A549 (cell line): ENCODE measurements at regions of chr6 and their contacts with region 1.

Region 1: DNA sequence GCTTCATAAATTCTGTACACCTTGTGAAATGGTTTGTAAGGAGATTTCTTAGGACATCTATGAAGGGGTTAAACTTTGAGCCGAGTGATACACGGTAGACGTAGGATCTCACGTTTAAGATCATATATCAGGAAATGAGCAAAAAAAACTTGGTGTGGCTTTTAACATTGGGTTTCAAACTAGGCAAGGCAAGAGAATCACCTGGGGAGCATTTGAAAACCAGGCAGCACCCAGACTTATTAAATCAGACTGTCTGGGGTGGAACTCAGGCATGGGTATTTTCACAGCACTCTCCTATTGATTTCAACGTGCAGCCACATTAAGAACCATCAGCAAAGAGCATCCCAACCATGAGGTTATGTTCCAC is 26.4 kb downstream of the LY86 start:
- DNase-seq: no peak
- ATAC-seq: no peak
- H3K4me3 ChIP-seq: no peak overlapping the region
- H3K27ac ChIP-seq: no peak overlapping the region
- H3K4me1 ChIP-seq: no peaks in the 10 kb centered on the region
- CTCF ChIP-seq: no peak
- EP300 ChIP-seq: no peak
- POLR2A ChIP-seq: no peak
- RAD21 ChIP-seq: no peak

Region 2: DNA sequence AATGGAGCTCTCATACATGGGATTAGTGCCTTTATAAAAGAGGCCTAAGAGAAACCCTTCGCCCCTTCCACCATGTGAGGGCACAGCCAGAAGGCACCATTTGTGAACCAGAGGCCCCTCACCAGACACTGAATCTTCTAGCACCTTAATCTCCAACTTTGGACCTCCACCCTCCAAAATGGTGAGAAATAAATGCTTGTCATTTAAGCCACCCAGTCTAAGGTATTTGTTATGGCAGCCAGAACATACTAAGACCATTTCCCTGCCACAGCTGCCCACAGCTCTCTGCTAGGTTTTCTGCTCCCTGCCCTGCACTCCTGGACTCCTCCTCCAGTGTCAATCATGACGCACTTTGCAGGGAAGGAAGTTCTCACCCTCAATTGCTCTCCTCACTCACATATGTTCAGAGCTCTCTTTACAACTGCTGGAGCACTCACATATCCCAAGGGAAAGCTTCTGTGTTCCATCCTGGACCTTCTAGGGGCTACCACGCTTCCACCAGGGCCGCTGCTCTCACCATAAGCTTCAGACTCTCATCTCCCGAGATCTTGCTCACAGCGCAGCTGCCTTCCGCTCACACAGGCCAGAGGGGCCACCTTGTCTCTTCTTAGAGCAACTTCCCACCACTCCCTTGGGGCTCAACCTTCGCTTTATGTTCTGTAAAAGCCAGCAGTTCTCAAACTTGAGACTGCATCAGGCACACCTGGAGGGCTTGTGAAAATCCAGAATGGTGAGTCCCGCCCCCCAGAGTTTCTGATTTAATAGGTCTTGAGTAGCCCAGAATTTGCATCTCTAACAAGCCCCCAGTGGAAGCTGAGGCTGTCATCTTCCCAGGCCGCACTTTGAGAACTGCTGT is 28.1 kb before region 1 on chr6:
- CTCF ChIA-PET with region 1: no interaction called
- POLR2A ChIA-PET with region 1: no interaction called
- DNase-seq: no peak
- ATAC-seq: no peak
- H3K4me3 ChIP-seq: no peak overlapping the region
- H3K27ac ChIP-seq: no peak overlapping the region
- H3K4me1 ChIP-seq: no peaks in the 10 kb centered on the region
- CTCF ChIP-seq: no peak
- EP300 ChIP-seq: no peak
- POLR2A ChIP-seq: no peak
- RAD21 ChIP-seq: no peak

Region 3: DNA sequence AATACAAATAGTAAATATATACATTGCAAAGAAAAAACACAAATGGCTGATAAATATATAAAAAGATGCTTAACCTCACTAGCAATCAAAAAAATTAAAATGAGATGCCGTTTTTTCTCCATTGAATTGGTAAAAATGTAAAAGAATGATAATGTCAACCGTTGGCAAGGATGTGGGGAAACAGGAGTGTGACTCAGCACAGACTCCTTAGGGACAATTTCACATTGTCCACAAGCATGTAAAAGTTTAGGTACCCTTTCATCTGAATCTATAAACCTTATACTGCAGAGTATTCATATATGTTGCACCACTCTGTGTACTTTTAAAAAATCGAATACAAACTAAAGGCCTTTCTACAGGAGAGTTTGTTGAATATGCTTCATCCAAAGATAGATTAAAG is 349.7 kb after region 1 on chr6:
- CTCF ChIA-PET with region 1: no interaction called
- POLR2A ChIA-PET with region 1: interaction called, 10 read pairs
- DNase-seq: no peak
- ATAC-seq: no peak
- H3K4me3 ChIP-seq: no peak overlapping the region
- H3K27ac ChIP-seq: no peak overlapping the region; a peak in 1 of 6 replicates
- H3K4me1 ChIP-seq: peaks cover 3% of the 10 kb centered on the region; the same call in 1 of the 3 replicates
- CTCF ChIP-seq: no peak
- EP300 ChIP-seq: no peak
- POLR2A ChIP-seq: no peak
- RAD21 ChIP-seq: no peak